Ovary (tissue), 10 donors: ENCODE measurements at regions of chr10 and their contacts with region 1.

Region 1: GRCh38 chr10:59906417-59907202 is at the start of gene CCDC6:
- DNase-seq: peak; percentile 89 to 94 (median 92)
- H3K4me3 ChIP-seq: peak within 1 kb of the TSS; percentile 95
- H3K27ac ChIP-seq: peak within 1 kb of the TSS; percentile 67 to 93
- H3K4me1 ChIP-seq: peaks cover 13% of the 10 kb centered on the region
- H3K27me3 ChIP-seq: no peaks in the 10 kb centered on the region
- CTCF ChIP-seq: peak; percentile 66 to 86 (median 85)
- EP300 ChIP-seq: no peak
- POLR2A ChIP-seq: peak; percentile 37
- total RNA-seq, gene CCDC6: 22.2 to 46.8 (median 34.2) TPM

Region 2: DNA sequence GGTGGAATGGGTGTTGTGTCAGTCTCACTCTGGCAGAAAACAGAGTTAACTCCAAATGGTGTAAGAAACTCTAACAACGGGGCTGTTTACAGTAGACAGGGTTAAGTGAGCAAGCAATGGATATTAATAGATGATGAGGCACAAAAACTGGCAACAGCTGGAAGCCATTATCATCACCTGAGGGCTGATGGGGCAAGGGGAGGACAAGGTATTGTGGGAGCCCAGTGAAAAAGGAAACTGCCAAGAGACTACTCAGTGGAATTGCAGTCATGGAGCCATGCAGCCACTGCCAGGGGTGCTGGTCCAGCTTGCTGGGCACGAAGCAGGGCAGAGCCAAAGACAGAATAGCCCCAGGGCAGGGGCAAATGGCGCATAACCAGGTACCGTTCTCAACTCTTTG is 1133.3 kb before region 1 on chr10:
- intact Hi-C with region 1: no loop called
- DNase-seq: no peak
- H3K4me3 ChIP-seq: no peak overlapping the region
- H3K27ac ChIP-seq: no peak overlapping the region
- H3K4me1 ChIP-seq: peaks cover 13% of the 10 kb centered on the region
- H3K27me3 ChIP-seq: no peaks in the 10 kb centered on the region
- CTCF ChIP-seq: no peak
- EP300 ChIP-seq: no peak
- POLR2A ChIP-seq: no peak

Region 3: GRCh38 chr10:59830601-59831259 is 75.9 kb before region 1 on chr10:
- intact Hi-C with region 1: loop called in 1 of 4 experiments (anchors 10 kb)
- DNase-seq: peak; percentile 50 to 76 (median 62)
- H3K4me3 ChIP-seq: no peak overlapping the region
- H3K27ac ChIP-seq: no peak overlapping the region
- H3K4me1 ChIP-seq: peaks cover 7% of the 10 kb centered on the region
- H3K27me3 ChIP-seq: no peaks in the 10 kb centered on the region
- CTCF ChIP-seq: peak; percentile 61 to 74 (median 65)
- EP300 ChIP-seq: no peak
- POLR2A ChIP-seq: no peak

Region 4: DNA sequence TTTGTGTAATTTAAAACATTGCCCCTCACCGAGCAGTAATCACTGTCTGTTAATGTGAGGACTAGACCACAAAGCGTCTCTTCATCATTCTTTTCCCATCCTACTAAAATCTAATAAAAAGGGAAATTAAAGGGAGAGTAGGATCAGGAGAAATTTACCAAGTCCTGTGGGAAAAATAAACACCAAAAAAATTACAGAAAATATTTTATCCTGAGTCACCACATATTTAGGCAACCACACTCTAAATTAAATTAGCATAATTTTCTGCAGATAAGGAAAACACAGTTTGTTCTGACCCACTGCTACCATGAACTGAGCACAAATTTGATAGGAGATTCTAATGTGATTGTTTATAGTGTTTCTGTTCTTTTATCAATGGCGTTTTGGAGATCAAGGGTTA is 49.6 kb before region 1 on chr10:
- intact Hi-C with region 1: loop called in 1 of 4 experiments (anchors 10 kb)
- DNase-seq: no peak
- H3K4me3 ChIP-seq: no peak overlapping the region
- H3K27ac ChIP-seq: no peak overlapping the region
- H3K4me1 ChIP-seq: peaks cover 12% of the 10 kb centered on the region
- H3K27me3 ChIP-seq: no peaks in the 10 kb centered on the region
- CTCF ChIP-seq: no peak
- EP300 ChIP-seq: no peak
- POLR2A ChIP-seq: no peak

Region 5: GRCh38 chr10:60167050-60167449 is 260.4 kb after region 1 on chr10:
- intact Hi-C with region 1: no loop called
- DNase-seq: no peak
- H3K4me3 ChIP-seq: no peak overlapping the region
- H3K27ac ChIP-seq: no peak overlapping the region
- H3K4me1 ChIP-seq: no peaks in the 10 kb centered on the region
- H3K27me3 ChIP-seq: no peaks in the 10 kb centered on the region
- CTCF ChIP-seq: no peak
- EP300 ChIP-seq: no peak
- POLR2A ChIP-seq: no peak

Region 6: DNA sequence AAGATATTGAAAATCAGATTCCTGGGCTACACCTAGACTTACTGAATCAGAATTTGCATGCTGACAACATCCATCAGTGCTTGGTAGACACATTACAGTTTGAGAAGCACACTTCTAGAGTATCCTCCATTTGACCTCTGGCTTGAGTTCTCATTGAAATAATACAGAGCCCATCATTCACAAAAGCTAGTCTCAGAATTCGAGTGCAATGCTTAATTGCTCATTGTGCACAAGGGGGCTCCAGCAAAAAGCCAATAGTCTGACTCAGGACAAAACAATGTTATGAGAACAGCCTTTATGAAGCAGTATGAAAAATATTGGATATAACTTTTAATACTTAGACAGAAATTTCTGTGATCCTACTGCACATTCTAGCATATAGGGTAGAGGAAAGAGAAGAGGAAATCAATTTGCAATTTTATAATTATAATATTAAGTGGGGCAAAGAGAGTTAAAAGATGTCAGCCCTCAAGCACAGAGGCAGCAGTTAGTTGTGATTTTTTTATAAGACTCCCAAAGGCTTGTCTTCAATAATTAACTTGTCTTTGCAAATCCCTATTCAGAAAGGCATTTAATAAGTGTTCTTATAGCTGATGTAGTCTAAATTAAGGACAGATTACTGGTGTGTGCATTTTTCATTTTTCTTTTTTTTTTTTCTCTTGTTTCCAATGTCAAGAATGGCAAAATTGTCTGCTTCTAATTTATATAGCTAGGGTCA is 588.9 kb after region 1 on chr10:
- intact Hi-C with region 1: no loop called
- DNase-seq: no peak
- H3K4me3 ChIP-seq: no peak overlapping the region
- H3K27ac ChIP-seq: no peak overlapping the region
- H3K4me1 ChIP-seq: peaks cover 3% of the 10 kb centered on the region
- H3K27me3 ChIP-seq: no peaks in the 10 kb centered on the region
- CTCF ChIP-seq: no peak
- EP300 ChIP-seq: no peak
- POLR2A ChIP-seq: no peak